ENCODE measurements at regions of chr7 and their contacts with region 1.

Region 1: GRCh38 chr7:94436018-94436604 is 41.4 kb downstream of the COL1A2 start:
- DNase-seq: peak; percentile 66 to 82 (median 72)
- ATAC-seq: peak; percentile 99
- H3K4me3 ChIP-seq: no peak overlapping the region
- H3K27ac ChIP-seq: no peak overlapping the region
- H3K4me1 ChIP-seq: no peaks in the 10 kb centered on the region
- H3K27me3 ChIP-seq: no peaks in the 10 kb centered on the region
- CTCF ChIP-seq: peak; percentile 68 to 85 (median 78)
- EP300 ChIP-seq: no peak
- POLR2A ChIP-seq: no peak
- RAD21 ChIP-seq: peak; percentile 48 to 67

Region 2: GRCh38 chr7:94289071-94289470 is 147.0 kb before region 1 on chr7:
- CTCF ChIA-PET with region 1: interaction called, 5 read pairs
- POLR2A ChIA-PET with region 1: no interaction called
- in situ Hi-C with region 1: no loop called
- intact Hi-C with region 1: loop called (anchors 1 kb)
- DNase-seq: peak in 2 of 4 experiments; percentile 47 to 60
- ATAC-seq: peak; percentile 84
- H3K4me3 ChIP-seq: no peak overlapping the region
- H3K27ac ChIP-seq: no peak overlapping the region
- H3K4me1 ChIP-seq: no peaks in the 10 kb centered on the region
- H3K27me3 ChIP-seq: no peaks in the 10 kb centered on the region
- CTCF ChIP-seq: peak; percentile 70 to 78 (median 75)
- EP300 ChIP-seq: no peak
- POLR2A ChIP-seq: no peak
- RAD21 ChIP-seq: peak; percentile 70 to 88

Region 3: GRCh38 chr7:94414481-94414880 is 21.6 kb before region 1 on chr7:
- CTCF ChIA-PET with region 1: no interaction called
- POLR2A ChIA-PET with region 1: no interaction called
- in situ Hi-C with region 1: no loop called
- intact Hi-C with region 1: no loop called
- DNase-seq: no peak
- ATAC-seq: no peak
- H3K4me3 ChIP-seq: no peak overlapping the region
- H3K27ac ChIP-seq: no peak overlapping the region
- H3K4me1 ChIP-seq: no peaks in the 10 kb centered on the region
- H3K27me3 ChIP-seq: no peaks in the 10 kb centered on the region; a peak in 1 of 5 replicates
- CTCF ChIP-seq: no peak
- EP300 ChIP-seq: no peak
- POLR2A ChIP-seq: no peak
- RAD21 ChIP-seq: no peak